ENCODE measurements at regions of chr16 and their contacts with region 1.

Region 1: DNA sequence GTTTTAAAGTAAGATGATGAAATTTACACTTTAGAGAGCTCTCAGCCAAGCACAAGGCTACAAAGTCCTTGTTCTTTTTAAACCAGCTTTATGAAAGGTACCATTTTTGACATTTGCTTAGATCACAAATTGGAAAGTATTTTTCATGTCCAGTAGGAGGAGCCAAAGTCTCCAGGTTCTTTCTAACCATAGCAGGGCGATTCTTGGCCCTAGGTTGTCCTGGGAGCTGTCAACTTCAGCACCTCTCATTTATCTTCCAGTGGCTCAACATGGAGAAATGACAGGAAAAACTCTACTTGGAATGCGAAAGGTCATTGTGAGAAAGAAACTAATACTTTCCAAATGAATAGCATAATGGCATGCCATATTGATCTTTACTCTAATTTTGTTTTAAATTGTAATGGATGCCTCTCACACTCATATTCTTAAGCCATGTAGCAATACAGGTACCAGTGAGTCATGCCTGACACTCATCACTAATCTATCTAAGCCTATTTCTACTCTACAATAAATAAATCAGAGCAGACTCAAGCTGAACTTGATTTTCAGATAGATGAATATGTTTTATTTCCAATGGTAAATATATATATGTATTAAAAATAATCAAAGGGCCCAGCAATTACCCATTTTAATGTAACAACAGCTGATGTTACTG is 919.1 kb upstream of the EEF2KMT start:
- DNase-seq: peak; percentile 59
- H3K4me3 ChIP-seq: no peak overlapping the region; a peak in 1 of 4 replicates
- H3K27ac ChIP-seq: no peak overlapping the region
- H3K4me1 ChIP-seq: peaks cover 0 to 8% of the 10 kb centered on the region in 2 experiments; a peak in 1 of 4 replicates
- H3K27me3 ChIP-seq: no peaks in the 10 kb centered on the region
- CTCF ChIP-seq: 0 out of 2 replicates have a peak, but pooled peaks have one; percentile 16
- EP300 ChIP-seq: no peak
- RAD21 ChIP-seq: peak; percentile 73

Region 2: DNA sequence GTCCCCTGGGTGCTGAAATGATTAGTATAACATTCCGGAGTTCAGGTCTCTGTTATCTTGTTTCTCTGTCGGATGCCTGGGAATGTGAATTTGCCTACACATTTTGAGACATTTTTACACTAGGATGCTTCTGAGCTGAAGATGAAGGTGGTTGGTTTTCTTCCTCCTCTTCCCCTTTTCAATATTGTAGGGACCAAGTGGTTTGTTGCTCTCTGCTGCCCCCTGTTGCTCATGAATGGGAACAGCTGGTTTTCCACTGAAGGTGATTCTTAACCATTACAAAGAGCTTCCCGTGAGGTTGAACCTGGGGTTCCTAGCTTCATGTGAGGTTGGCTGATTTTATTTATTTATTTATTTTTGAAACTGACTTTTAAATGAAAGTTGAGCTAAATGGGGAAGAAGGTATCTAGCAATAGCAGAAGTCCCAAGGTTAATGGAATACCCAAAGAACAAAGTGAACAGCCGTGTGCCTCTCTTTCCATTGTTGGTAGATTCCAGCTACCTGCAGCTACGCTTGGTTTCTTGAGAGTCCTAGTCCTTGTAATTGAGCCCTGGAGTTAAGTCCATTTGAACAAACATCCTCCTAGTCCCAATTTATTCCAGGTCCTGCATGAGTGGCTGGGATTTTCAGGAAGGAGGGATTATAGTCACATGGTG is 64.8 kb after region 1 on chr16:
- CTCF ChIA-PET with region 1: interaction called, 23 read pairs
- POLR2A ChIA-PET with region 1: no interaction called
- DNase-seq: peak; percentile 57
- H3K4me3 ChIP-seq: no peak overlapping the region; a peak in 1 of 4 replicates
- H3K27ac ChIP-seq: no peak overlapping the region
- H3K4me1 ChIP-seq: peaks cover 0 to 2% of the 10 kb centered on the region in 2 experiments; a peak in 1 of 4 replicates
- H3K27me3 ChIP-seq: no peaks in the 10 kb centered on the region
- CTCF ChIP-seq: peak; percentile 40
- EP300 ChIP-seq: no peak
- RAD21 ChIP-seq: peak; percentile 79

Region 3: DNA sequence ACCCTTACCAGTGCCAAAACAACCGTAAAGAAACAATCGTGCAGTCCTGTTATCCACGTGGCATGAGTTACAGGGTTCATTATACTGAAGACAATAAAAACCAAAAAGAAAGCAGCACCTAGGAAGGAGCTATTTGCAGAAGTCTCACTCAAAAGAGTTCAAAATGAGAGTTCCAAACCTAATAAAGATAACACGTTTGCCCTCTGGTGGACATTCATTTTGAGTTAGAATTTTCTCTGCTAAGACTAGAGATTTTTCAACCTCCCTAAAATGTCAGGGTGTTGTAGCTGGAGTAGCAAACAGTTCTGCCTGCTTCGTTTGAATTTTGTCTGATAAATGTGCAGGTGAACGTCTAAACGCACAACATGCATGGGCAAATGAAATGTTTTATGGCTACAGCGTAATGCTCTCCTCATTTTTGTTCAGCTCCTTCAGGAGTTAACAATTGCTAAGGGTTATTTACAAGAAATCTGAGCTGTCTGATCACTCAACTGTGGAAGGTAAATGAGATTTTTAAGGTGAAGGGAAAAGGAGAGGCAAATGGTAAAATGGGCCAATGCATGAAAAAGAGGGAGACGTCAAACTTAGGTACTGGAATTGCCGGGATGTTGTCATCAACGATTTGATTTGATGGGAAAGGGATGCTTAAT is 148.8 kb after region 1 on chr16:
- CTCF ChIA-PET with region 1: interaction called, 18 read pairs
- POLR2A ChIA-PET with region 1: no interaction called
- DNase-seq: peak; percentile 15
- H3K4me3 ChIP-seq: 0 out of 4 replicates have a peak overlapping the region, but pooled peaks of 1 of the 2 experiments have one; percentile 9
- H3K27ac ChIP-seq: no peak overlapping the region
- H3K4me1 ChIP-seq: no peaks in the 10 kb centered on the region
- H3K27me3 ChIP-seq: no peaks in the 10 kb centered on the region
- CTCF ChIP-seq: no peak
- EP300 ChIP-seq: no peak
- RAD21 ChIP-seq: peak; percentile 56

Region 4: GRCh38 chr16:6643080-6643686 is 626.5 kb after region 1 on chr16:
- CTCF ChIA-PET with region 1: interaction called, 13 read pairs
- POLR2A ChIA-PET with region 1: no interaction called
- DNase-seq: peak; percentile 36
- H3K4me3 ChIP-seq: no peak overlapping the region; a peak in 1 of 4 replicates
- H3K27ac ChIP-seq: no peak overlapping the region
- H3K4me1 ChIP-seq: no peaks in the 10 kb centered on the region; a peak in 1 of 4 replicates
- H3K27me3 ChIP-seq: no peaks in the 10 kb centered on the region
- CTCF ChIP-seq: peak; percentile 83
- EP300 ChIP-seq: no peak
- RAD21 ChIP-seq: peak; percentile 91

Measured in SK-N-SH (cell line).